Activated CD4-positive, alpha-beta memory T cell treated with anti-CD3 and anti-CD28 coated beads, Interleukin-2, amount 10 ng/mL, durations not matched to agents 7 days and 5 days (primary cell): ENCODE measurements at regions of chr12 and their contacts with region 1.

Region 1: GRCh38 chr12:114508529-114509129 is 102.7 kb upstream of the TBX5 start:
- DNase-seq: peak; percentile 58
- H3K4me3 Mint-ChIP-seq: no peak overlapping the region
- H3K27ac Mint-ChIP-seq: no peak overlapping the region
- H3K4me1 Mint-ChIP-seq: no peaks in the 10 kb centered on the region
- H3K27me3 Mint-ChIP-seq: peaks cover 5% of the 10 kb centered on the region

Region 2: GRCh38 chr12:113965951-113966797 is 542.5 kb before region 1 on chr12 and contains the start of gene RBM19:
- CTCF ChIA-PET with region 1: interaction called, 18 read pairs
- POLR2A ChIA-PET with region 1: no interaction called
- DNase-seq: peak; percentile 98
- H3K4me3 Mint-ChIP-seq: peak within 1 kb of the TSS; percentile 98
- H3K27ac Mint-ChIP-seq: peak within 1 kb of the TSS; percentile 88
- H3K4me1 Mint-ChIP-seq: peaks cover 56% of the 10 kb centered on the region
- H3K27me3 Mint-ChIP-seq: peaks cover 4% of the 10 kb centered on the region
- total RNA-seq, gene RBM19: 31.5 to 32.4 TPM

Region 3: DNA sequence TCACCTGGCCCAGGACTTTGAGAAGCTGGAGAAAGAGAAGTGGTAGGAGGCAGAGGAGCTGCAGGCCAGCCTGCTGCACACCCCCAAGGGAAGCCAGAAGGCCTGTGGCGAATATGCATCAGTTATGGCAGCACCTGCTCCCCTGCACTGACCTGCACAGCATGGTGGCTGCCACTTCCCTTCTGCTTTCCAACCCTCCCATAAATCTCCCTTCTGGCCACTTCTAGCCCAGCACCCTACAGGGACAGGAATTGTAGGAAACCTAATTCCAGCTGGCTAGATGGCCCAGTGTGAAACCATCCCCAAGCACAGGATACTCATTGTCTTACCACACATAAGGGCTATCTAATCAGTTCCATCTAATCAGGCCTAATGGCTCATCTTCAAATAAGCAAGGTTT is 39.0 kb after region 1 on chr12:
- CTCF ChIA-PET with region 1: no interaction called
- POLR2A ChIA-PET with region 1: no interaction called
- DNase-seq: no peak
- H3K4me3 Mint-ChIP-seq: no peak overlapping the region
- H3K27ac Mint-ChIP-seq: no peak overlapping the region
- H3K4me1 Mint-ChIP-seq: no peaks in the 10 kb centered on the region
- H3K27me3 Mint-ChIP-seq: no peaks in the 10 kb centered on the region